Thyroid gland (tissue), 4 donors: ENCODE measurements at regions of chr17 and their contacts with region 1.

Region 1: GRCh38 chr17:28612936-28613872 is 781 bp downstream of the RSKR start:
- DNase-seq: peak; percentile 48 to 49
- H3K4me3 ChIP-seq: no peak overlapping the region
- H3K27ac ChIP-seq: peak overlapping the region in 1 of 3 donors; percentile 15
- H3K4me1 ChIP-seq: peaks cover 0 to 6% of the 10 kb centered on the region in 2 donors
- H3K27me3 ChIP-seq: no peaks in the 10 kb centered on the region
- CTCF ChIP-seq: peak; percentile 33 to 76 (median 58)
- POLR2A ChIP-seq: no peak

Region 2: GRCh38 chr17:28494445-28495188 is 118.6 kb before region 1 on chr17:
- intact Hi-C with region 1: loop called (anchors 5 kb)
- DNase-seq: peak; percentile 72 to 80
- H3K4me3 ChIP-seq: no peak overlapping the region
- H3K27ac ChIP-seq: no peak overlapping the region
- H3K4me1 ChIP-seq: peaks cover 3 to 6% of the 10 kb centered on the region in 2 donors
- H3K27me3 ChIP-seq: no peaks in the 10 kb centered on the region
- CTCF ChIP-seq: peak; percentile 78 to 92 (median 86)
- POLR2A ChIP-seq: no peak

Region 3: GRCh38 chr17:28547623-28548416 is 65.4 kb before region 1 on chr17:
- intact Hi-C with region 1: loop called (anchors 2 kb)
- DNase-seq: peak; percentile 75 to 78
- H3K4me3 ChIP-seq: no peak overlapping the region
- H3K27ac ChIP-seq: no peak overlapping the region
- H3K4me1 ChIP-seq: peaks cover 10 to 17% of the 10 kb centered on the region in 2 donors
- H3K27me3 ChIP-seq: no peaks in the 10 kb centered on the region
- CTCF ChIP-seq: peak; percentile 82 to 94 (median 84)
- POLR2A ChIP-seq: no peak